ENCODE measurements at regions of chr15 and their contacts with region 1.

Region 1: GRCh38 chr15:86653344-86654197 is 573.9 kb downstream of the AGBL1 start:
- DNase-seq: no peak
- H3K4me3 Mint-ChIP-seq: peak overlapping the region; percentile 34
- H3K27ac Mint-ChIP-seq: peak overlapping the region; percentile 88
- H3K4me1 Mint-ChIP-seq: peaks cover 37% of the 10 kb centered on the region
- H3K27me3 Mint-ChIP-seq: peaks cover 1% of the 10 kb centered on the region

Region 2: DNA sequence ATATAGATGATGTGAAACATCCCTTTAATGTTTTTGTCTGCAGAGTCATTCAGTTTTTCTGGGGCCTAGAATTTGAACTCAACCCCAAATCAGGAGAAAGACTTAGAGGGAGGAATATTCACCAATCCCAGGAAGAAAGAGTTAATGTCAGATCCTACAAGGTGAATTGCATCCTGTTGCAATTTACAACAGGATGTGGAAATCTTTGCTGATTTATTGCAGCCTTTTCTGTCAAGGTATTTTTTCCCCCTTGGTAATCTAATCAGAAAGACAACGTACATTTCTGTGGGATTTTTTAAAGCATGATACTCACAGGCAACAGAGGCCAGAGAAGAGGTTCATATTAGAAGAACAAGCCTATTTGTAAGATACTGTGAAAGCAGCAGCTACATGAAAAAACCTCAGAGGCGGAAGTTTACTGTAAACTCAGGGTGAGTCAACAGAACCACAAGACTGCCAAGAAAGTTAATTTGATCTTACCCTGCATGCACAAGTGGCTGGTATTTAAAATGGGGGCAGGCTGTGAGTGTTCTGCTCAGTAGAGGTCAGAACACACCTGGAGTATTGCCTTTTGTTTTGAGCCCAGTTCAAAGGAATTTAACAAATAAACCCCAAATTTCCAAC is 42.0 kb before region 1 on chr15:
- intact Hi-C with region 1: loop called (anchors 1 kb)
- DNase-seq: peak; percentile 36
- H3K4me3 Mint-ChIP-seq: no peak overlapping the region
- H3K27ac Mint-ChIP-seq: peak overlapping the region; percentile 47
- H3K4me1 Mint-ChIP-seq: peaks cover 42% of the 10 kb centered on the region
- H3K27me3 Mint-ChIP-seq: no peaks in the 10 kb centered on the region

Region 3: GRCh38 chr15:86663979-86664378 is 10.4 kb after region 1 on chr15:
- intact Hi-C with region 1: no loop called
- DNase-seq: no peak
- H3K4me3 Mint-ChIP-seq: no peak overlapping the region
- H3K27ac Mint-ChIP-seq: no peak overlapping the region
- H3K4me1 Mint-ChIP-seq: peaks cover 6% of the 10 kb centered on the region
- H3K27me3 Mint-ChIP-seq: no peaks in the 10 kb centered on the region

Region 4: DNA sequence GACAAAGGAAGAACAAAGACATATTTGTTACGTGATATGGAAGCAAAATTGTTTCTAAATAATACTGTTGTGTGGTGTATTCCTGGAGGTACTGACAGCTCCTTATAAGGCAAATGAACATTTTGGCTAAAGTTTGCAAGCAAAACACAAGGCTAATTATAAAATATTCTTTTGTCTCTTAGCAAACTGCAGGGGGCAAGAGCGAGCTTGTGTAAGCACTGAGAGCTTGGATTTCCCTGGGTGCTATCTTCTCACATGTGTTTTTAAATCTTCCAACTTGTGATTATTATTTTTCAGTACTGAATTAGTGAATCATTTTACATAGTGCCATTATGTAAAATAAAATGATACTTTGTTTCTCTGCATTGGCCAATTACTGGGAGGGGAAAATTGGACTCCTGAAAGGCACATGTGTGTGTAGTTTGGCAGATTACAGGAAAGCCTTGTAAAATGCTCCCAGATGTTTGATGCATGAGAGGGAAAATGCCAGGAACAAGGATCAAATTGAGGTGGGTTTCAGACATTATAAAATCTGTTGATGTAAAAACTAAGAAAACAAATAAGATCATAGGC is 37.6 kb after region 1 on chr15:
- intact Hi-C with region 1: loop called (anchors 2 kb)
- DNase-seq: no peak
- H3K4me3 Mint-ChIP-seq: no peak overlapping the region
- H3K27ac Mint-ChIP-seq: no peak overlapping the region
- H3K4me1 Mint-ChIP-seq: no peaks in the 10 kb centered on the region
- H3K27me3 Mint-ChIP-seq: no peaks in the 10 kb centered on the region

Region 5: GRCh38 chr15:86711476-86711875 is 57.9 kb after region 1 on chr15:
- intact Hi-C with region 1: no loop called
- DNase-seq: no peak
- H3K4me3 Mint-ChIP-seq: no peak overlapping the region
- H3K27ac Mint-ChIP-seq: no peak overlapping the region
- H3K4me1 Mint-ChIP-seq: no peaks in the 10 kb centered on the region
- H3K27me3 Mint-ChIP-seq: no peaks in the 10 kb centered on the region

Region 6: GRCh38 chr15:86929461-86929860 is 275.9 kb after region 1 on chr15:
- intact Hi-C with region 1: no loop called
- DNase-seq: no peak
- H3K4me3 Mint-ChIP-seq: no peak overlapping the region
- H3K27ac Mint-ChIP-seq: no peak overlapping the region
- H3K4me1 Mint-ChIP-seq: no peaks in the 10 kb centered on the region
- H3K27me3 Mint-ChIP-seq: no peaks in the 10 kb centered on the region